ENCODE measurements at regions of chr11 and their contacts with region 1.

Region 1: DNA sequence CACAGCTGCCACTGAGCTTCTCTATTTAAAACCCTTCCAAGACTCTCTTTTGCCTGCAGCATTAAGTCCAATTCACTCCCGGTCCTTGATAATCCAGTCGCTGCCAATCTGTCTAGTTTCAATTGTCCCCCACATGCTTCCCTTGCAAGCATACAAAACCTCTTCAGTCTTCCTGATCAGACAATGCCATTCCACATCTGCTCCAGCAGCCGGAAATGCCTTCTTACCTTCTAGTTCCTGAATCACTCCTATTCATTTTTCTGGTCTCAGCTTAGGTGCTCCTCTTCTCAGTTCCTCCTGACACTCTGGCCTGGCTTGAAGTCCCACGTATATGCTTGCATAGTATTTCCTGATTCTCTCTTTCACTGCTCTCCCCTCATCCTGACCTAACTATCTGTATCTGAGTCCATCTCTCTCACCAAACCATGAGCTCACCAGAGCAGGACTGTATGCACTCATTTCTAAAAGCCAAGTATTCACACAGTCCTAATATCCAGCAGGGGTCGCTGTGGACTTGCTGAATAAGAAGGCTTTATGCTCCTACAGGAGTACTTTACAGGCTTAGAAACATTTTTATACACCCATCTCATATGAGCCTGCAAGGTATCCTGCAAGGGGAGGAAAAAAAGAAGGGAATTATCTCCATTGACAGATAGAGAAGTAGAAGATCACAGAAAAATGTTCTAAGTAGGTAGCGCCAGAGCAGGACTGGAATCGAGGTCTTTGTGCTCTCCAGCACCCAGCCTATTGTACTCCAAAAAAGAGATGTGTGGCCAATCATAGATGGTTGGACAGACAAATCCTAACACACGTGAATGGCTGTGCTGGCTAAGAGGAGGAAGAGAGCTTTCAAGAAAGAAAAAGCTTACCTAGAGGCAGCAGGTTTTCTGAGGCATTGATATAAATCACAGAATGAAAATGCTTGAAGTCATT is 19.2 kb downstream of the XRRA1 start:
- DNase-seq: peak; percentile 69
- H3K4me3 Mint-ChIP-seq: no peak overlapping the region
- H3K27ac Mint-ChIP-seq: no peak overlapping the region
- H3K4me1 Mint-ChIP-seq: peaks cover 14% of the 10 kb centered on the region
- H3K27me3 Mint-ChIP-seq: no peaks in the 10 kb centered on the region

Region 2: GRCh38 chr11:74506823-74507222 is 422.9 kb before region 1 on chr11:
- CTCF ChIA-PET with region 1: no interaction called
- POLR2A ChIA-PET with region 1: no interaction called
- intact Hi-C with region 1: no loop called
- DNase-seq: no peak
- H3K4me3 Mint-ChIP-seq: no peak overlapping the region
- H3K27ac Mint-ChIP-seq: no peak overlapping the region
- H3K4me1 Mint-ChIP-seq: no peaks in the 10 kb centered on the region
- H3K27me3 Mint-ChIP-seq: peaks cover 2% of the 10 kb centered on the region

Region 3: DNA sequence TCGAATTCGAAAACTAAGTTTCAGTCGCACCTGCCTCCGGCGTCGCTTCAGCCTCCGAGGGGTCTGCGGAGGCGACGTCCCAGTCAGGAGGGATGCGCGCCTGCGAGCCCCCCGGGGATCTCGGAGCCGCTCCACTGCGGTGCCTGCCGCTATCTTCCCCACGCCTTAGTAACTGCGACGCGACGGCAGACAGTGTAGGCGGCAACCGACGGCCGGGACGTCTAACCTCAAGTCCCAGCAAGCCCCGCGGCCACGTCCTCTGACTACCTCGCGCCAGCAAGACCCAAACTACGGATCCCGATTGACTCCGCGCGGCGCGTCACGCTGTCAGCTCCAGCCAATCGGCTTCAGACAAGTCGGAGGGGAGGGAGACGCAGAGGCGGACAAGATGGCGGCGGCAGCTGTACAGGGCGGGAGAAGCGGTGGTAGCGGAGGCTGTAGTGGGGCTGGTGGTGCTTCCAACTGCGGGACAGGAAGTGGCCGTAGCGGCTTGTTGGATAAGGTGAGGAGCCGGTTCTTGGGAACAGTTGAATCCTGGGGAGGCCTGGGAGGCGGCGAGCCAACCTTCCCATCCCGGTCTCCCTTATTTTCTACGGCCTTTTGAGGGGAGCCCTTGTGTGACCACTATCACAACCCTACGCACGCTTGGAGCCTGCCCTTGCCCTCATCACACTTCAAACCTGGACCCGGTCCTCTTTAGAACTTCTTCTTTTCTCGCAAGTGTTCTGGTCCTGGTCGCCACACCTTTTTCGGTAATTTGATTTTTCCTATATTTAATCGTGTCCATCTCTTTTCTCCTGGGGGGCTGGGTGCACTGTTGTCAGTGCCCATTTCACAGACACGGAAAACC is 19.4 kb after region 1 on chr11 and contains the starts of genes SPCS2 and XRRA1:
- CTCF ChIA-PET with region 1: interaction called, 4 read pairs
- POLR2A ChIA-PET with region 1: no interaction called
- intact Hi-C with region 1: loop called (anchors 2 kb)
- DNase-seq: peak; percentile 99
- H3K4me3 Mint-ChIP-seq: peak within 1 kb of the TSS; percentile 99
- H3K27ac Mint-ChIP-seq: peak within 1 kb of the TSS; percentile 91
- H3K4me1 Mint-ChIP-seq: peaks cover 39% of the 10 kb centered on the region
- H3K27me3 Mint-ChIP-seq: no peaks in the 10 kb centered on the region
- total RNA-seq, gene SPCS2: 126 to 138 TPM
- total RNA-seq, gene XRRA1: 9.1 to 13.0 TPM

Region 4: GRCh38 chr11:75022759-75023396 is 93.2 kb after region 1 on chr11:
- CTCF ChIA-PET with region 1: interaction called, 20 read pairs
- POLR2A ChIA-PET with region 1: no interaction called
- intact Hi-C with region 1: no loop called
- DNase-seq: peak; percentile 85
- H3K4me3 Mint-ChIP-seq: no peak overlapping the region
- H3K27ac Mint-ChIP-seq: no peak overlapping the region
- H3K4me1 Mint-ChIP-seq: no peaks in the 10 kb centered on the region
- H3K27me3 Mint-ChIP-seq: no peaks in the 10 kb centered on the region

Region 5: GRCh38 chr11:75063732-75064314 is 134.1 kb after region 1 on chr11:
- CTCF ChIA-PET with region 1: no interaction called
- POLR2A ChIA-PET with region 1: no interaction called
- intact Hi-C with region 1: no loop called
- DNase-seq: no peak
- H3K4me3 Mint-ChIP-seq: no peak overlapping the region
- H3K27ac Mint-ChIP-seq: no peak overlapping the region
- H3K4me1 Mint-ChIP-seq: no peaks in the 10 kb centered on the region
- H3K27me3 Mint-ChIP-seq: peaks cover 16% of the 10 kb centered on the region

Region 6: GRCh38 chr11:75100314-75100713 is 170.6 kb after region 1 on chr11:
- CTCF ChIA-PET with region 1: no interaction called
- POLR2A ChIA-PET with region 1: interaction called, 3 read pairs
- intact Hi-C with region 1: loop called (anchors 5 kb)
- DNase-seq: peak; percentile 79
- H3K4me3 Mint-ChIP-seq: no peak overlapping the region
- H3K27ac Mint-ChIP-seq: no peak overlapping the region
- H3K4me1 Mint-ChIP-seq: peaks cover 24% of the 10 kb centered on the region
- H3K27me3 Mint-ChIP-seq: peaks cover 43% of the 10 kb centered on the region

Region 7: GRCh38 chr11:75241036-75241905 is 311.6 kb after region 1 on chr11:
- CTCF ChIA-PET with region 1: interaction called, 28 read pairs
- POLR2A ChIA-PET with region 1: no interaction called
- intact Hi-C with region 1: no loop called
- DNase-seq: peak; percentile 91
- H3K4me3 Mint-ChIP-seq: peak overlapping the region; percentile 69
- H3K27ac Mint-ChIP-seq: no peak overlapping the region
- H3K4me1 Mint-ChIP-seq: peaks cover 7% of the 10 kb centered on the region
- H3K27me3 Mint-ChIP-seq: peaks cover 29% of the 10 kb centered on the region

Region 8: GRCh38 chr11:75270896-75271418 is 341.3 kb after region 1 on chr11:
- CTCF ChIA-PET with region 1: interaction called, 10 read pairs
- POLR2A ChIA-PET with region 1: interaction called, 4 read pairs
- intact Hi-C with region 1: no loop called
- DNase-seq: no peak
- H3K4me3 Mint-ChIP-seq: no peak overlapping the region
- H3K27ac Mint-ChIP-seq: no peak overlapping the region
- H3K4me1 Mint-ChIP-seq: peaks cover 32% of the 10 kb centered on the region
- H3K27me3 Mint-ChIP-seq: no peaks in the 10 kb centered on the region